A549 (cell line): ENCODE measurements at regions of chr11 and their contacts with region 1.

Region 1: GRCh38 chr11:236774-237767 is at the start of gene PSMD13:
- DNase-seq: peak; percentile 77 to 93
- ATAC-seq: peak; percentile 93 to 97
- H3K4me3 ChIP-seq: peak within 1 kb of the TSS; percentile 91
- H3K27ac ChIP-seq: peak within 1 kb of the TSS; percentile 95 to 96
- H3K4me1 ChIP-seq: peaks cover 17% of the 10 kb centered on the region; the same call in 2 of the 3 replicates
- CTCF ChIP-seq: no peak
- EP300 ChIP-seq: no peak
- POLR2A ChIP-seq: peak; percentile 52
- RAD21 ChIP-seq: no peak
- polyA plus RNA-seq, gene PSMD13: 144 and 153 TPM in 2 replicates

Region 2: GRCh38 chr11:223026-223789 is 13.9 kb before region 1 on chr11:
- CTCF ChIA-PET with region 1: interaction called, 10 read pairs
- POLR2A ChIA-PET with region 1: no interaction called
- DNase-seq: no peak
- ATAC-seq: no peak
- H3K4me3 ChIP-seq: no peak overlapping the region
- H3K27ac ChIP-seq: no peak overlapping the region
- H3K4me1 ChIP-seq: no peaks in the 10 kb centered on the region
- CTCF ChIP-seq: no peak
- EP300 ChIP-seq: no peak
- POLR2A ChIP-seq: no peak
- RAD21 ChIP-seq: no peak

Region 3: GRCh38 chr11:250740-251299 is 13.7 kb after region 1 on chr11:
- CTCF ChIA-PET with region 1: interaction called, 40 read pairs
- POLR2A ChIA-PET with region 1: interaction called, 4 read pairs
- DNase-seq: peak; percentile 30 to 63
- ATAC-seq: peak; percentile 86 to 93
- H3K4me3 ChIP-seq: no peak overlapping the region
- H3K27ac ChIP-seq: no peak overlapping the region
- H3K4me1 ChIP-seq: no peaks in the 10 kb centered on the region
- CTCF ChIP-seq: peak; percentile 64
- EP300 ChIP-seq: no peak
- POLR2A ChIP-seq: no peak
- RAD21 ChIP-seq: peak; percentile 42 to 49; a peak in 4 of 5 replicates

Region 4: DNA sequence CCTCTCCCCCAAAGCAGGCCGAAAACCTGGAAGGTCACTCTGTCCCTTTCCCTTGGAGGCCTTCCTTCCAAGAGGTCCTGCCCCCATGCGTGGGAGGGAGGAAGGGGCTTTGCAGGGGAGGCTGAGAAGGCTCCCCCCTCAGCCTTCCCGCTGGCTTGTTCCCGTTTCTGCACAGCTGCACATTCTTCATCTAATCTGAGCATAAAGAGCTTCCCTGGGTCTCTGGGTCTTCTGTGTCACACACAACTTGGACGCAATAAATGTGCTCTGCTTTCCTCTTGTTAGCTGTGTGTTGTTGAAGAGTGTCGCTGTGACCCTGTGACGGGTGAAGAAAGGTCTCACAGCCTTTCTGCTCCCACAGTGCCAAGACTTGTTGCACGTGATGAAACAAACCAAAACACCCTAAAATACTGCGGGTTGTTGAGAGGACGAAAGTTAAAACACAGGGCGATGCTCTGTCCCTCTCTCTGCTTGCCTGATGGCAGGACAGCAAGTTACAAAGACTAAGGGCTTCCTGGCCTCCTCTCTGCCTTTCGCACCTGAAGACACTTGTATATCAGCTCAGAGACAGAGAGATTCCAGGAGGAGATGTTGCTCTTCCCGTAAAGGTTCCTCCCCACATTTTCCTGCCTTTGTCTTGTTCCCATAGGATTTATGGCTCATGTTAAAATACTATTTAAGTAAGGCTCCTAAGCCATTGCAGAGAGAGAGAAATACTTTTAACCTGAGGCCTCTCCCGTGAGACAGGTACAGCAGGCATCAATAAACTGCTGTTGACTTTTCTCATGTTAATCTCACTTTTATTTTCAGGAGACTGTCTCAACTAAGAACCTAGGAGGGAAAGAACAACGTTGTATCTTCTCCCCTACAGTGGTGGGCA is 98.9 kb after region 1 on chr11:
- CTCF ChIA-PET with region 1: no interaction called
- POLR2A ChIA-PET with region 1: no interaction called
- DNase-seq: no peak
- ATAC-seq: no peak
- H3K4me3 ChIP-seq: no peak overlapping the region
- H3K27ac ChIP-seq: no peak overlapping the region; a peak in 1 of 6 replicates
- H3K4me1 ChIP-seq: no peaks in the 10 kb centered on the region
- CTCF ChIP-seq: no peak
- EP300 ChIP-seq: no peak
- POLR2A ChIP-seq: no peak
- RAD21 ChIP-seq: no peak

Region 5: GRCh38 chr11:346529-346928 is 109.5 kb after region 1 on chr11:
- CTCF ChIA-PET with region 1: no interaction called
- POLR2A ChIA-PET with region 1: no interaction called
- DNase-seq: no peak
- ATAC-seq: no peak
- H3K4me3 ChIP-seq: no peak overlapping the region
- H3K27ac ChIP-seq: no peak overlapping the region
- H3K4me1 ChIP-seq: no peaks in the 10 kb centered on the region
- CTCF ChIP-seq: no peak
- EP300 ChIP-seq: no peak
- POLR2A ChIP-seq: no peak
- RAD21 ChIP-seq: no peak

Region 6: GRCh38 chr11:520428-521176 is 283.5 kb after region 1 on chr11:
- CTCF ChIA-PET with region 1: no interaction called
- POLR2A ChIA-PET with region 1: no interaction called
- DNase-seq: no peak
- ATAC-seq: no peak
- H3K4me3 ChIP-seq: no peak overlapping the region
- H3K27ac ChIP-seq: no peak overlapping the region
- H3K4me1 ChIP-seq: peaks cover 5% of the 10 kb centered on the region; the same call in 1 of the 3 replicates
- CTCF ChIP-seq: no peak
- EP300 ChIP-seq: no peak
- POLR2A ChIP-seq: no peak
- RAD21 ChIP-seq: no peak